ENCODE measurements at regions of chr15 and their contacts with region 1.

Region 1: GRCh38 chr15:35618260-35619188 is 72.6 kb upstream of the DPH6 start:
- DNase-seq: no peak
- ATAC-seq: no peak
- H3K4me3 ChIP-seq: no peak overlapping the region
- H3K4me3 Mint-ChIP-seq: no peak overlapping the region
- H3K27ac ChIP-seq: no peak overlapping the region
- H3K27ac Mint-ChIP-seq: no peak overlapping the region
- H3K4me1 ChIP-seq: no peaks in the 10 kb centered on the region
- H3K4me1 Mint-ChIP-seq: no peaks in the 10 kb centered on the region
- H3K27me3 ChIP-seq: no peaks in the 10 kb centered on the region
- H3K27me3 Mint-ChIP-seq: peaks cover 0 to 29% (median 6%) of the 10 kb centered on the region in 5 donors

Region 2: GRCh38 chr15:35633677-35634076 is 15.2 kb after region 1 on chr15:
- CTCF ChIA-PET with region 1: no interaction called
- POLR2A ChIA-PET with region 1: no interaction called
- intact Hi-C with region 1: loop called in 1 of 2 experiments (anchors 2 kb)
- DNase-seq: no peak
- ATAC-seq: no peak
- H3K4me3 ChIP-seq: no peak overlapping the region
- H3K4me3 Mint-ChIP-seq: no peak overlapping the region
- H3K27ac ChIP-seq: no peak overlapping the region
- H3K27ac Mint-ChIP-seq: no peak overlapping the region
- H3K4me1 ChIP-seq: no peaks in the 10 kb centered on the region
- H3K4me1 Mint-ChIP-seq: no peaks in the 10 kb centered on the region
- H3K27me3 ChIP-seq: peaks cover 0 to 4% of the 10 kb centered on the region in 2 donors
- H3K27me3 Mint-ChIP-seq: peaks cover 3 to 47% (median 31%) of the 10 kb centered on the region in 5 donors

Region 3: GRCh38 chr15:35958021-35958420 is 339.5 kb after region 1 on chr15:
- CTCF ChIA-PET with region 1: no interaction called
- POLR2A ChIA-PET with region 1: no interaction called
- intact Hi-C with region 1: no loop called
- DNase-seq: no peak
- ATAC-seq: no peak
- H3K4me3 ChIP-seq: no peak overlapping the region
- H3K4me3 Mint-ChIP-seq: no peak overlapping the region
- H3K27ac ChIP-seq: no peak overlapping the region
- H3K27ac Mint-ChIP-seq: no peak overlapping the region
- H3K4me1 ChIP-seq: no peaks in the 10 kb centered on the region
- H3K4me1 Mint-ChIP-seq: no peaks in the 10 kb centered on the region
- H3K27me3 ChIP-seq: no peaks in the 10 kb centered on the region
- H3K27me3 Mint-ChIP-seq: peaks cover 0 to 6% (median 0%) of the 10 kb centered on the region in 5 donors

Measured in naive thymus-derived CD4-positive, alpha-beta T cell (primary cell).